Thyroid gland (tissue), 4 donors: ENCODE measurements at regions of chr18 and their contacts with region 1.

Region 1: GRCh38 chr18:38961880-38962279 is 1396.3 kb upstream of the CELF4 start:
- DNase-seq: no peak
- H3K4me3 ChIP-seq: no peak overlapping the region
- H3K27ac ChIP-seq: no peak overlapping the region
- H3K4me1 ChIP-seq: no peaks in the 10 kb centered on the region
- H3K27me3 ChIP-seq: no peaks in the 10 kb centered on the region
- CTCF ChIP-seq: no peak
- POLR2A ChIP-seq: no peak

Region 2: DNA sequence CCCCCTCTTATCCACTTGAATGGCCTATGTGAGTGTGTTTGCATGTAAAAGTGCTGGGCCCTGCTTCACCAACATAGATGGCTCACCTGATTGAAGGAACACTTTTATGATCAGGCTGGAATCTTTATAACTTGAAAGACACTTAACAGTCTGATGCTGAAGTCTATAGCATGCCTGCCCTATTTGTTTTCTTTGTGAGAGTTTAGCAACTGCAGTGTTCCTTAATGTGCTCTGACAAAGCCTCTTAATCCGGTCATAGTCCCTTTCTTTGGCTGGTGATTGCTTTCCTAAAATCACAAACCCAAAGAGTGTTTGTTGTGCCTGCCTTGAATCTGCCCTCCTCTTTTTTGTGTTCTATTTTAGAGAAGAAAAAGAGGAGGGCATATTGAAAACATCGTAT is 13.4 kb before region 1 on chr18:
- intact Hi-C with region 1: loop called (anchors 2 kb)
- DNase-seq: no peak
- H3K4me3 ChIP-seq: no peak overlapping the region
- H3K27ac ChIP-seq: no peak overlapping the region
- H3K4me1 ChIP-seq: no peaks in the 10 kb centered on the region
- H3K27me3 ChIP-seq: no peaks in the 10 kb centered on the region
- CTCF ChIP-seq: no peak
- POLR2A ChIP-seq: no peak

Region 3: GRCh38 chr18:39030124-39030655 is 68.3 kb after region 1 on chr18:
- intact Hi-C with region 1: no loop called
- DNase-seq: no peak
- H3K4me3 ChIP-seq: no peak overlapping the region
- H3K27ac ChIP-seq: no peak overlapping the region
- H3K4me1 ChIP-seq: no peaks in the 10 kb centered on the region
- H3K27me3 ChIP-seq: no peaks in the 10 kb centered on the region
- CTCF ChIP-seq: no peak
- POLR2A ChIP-seq: no peak